CD4-positive, alpha-beta memory T cell (primary cell): ENCODE measurements at regions of chr12 and their contacts with region 1.

Region 1: DNA sequence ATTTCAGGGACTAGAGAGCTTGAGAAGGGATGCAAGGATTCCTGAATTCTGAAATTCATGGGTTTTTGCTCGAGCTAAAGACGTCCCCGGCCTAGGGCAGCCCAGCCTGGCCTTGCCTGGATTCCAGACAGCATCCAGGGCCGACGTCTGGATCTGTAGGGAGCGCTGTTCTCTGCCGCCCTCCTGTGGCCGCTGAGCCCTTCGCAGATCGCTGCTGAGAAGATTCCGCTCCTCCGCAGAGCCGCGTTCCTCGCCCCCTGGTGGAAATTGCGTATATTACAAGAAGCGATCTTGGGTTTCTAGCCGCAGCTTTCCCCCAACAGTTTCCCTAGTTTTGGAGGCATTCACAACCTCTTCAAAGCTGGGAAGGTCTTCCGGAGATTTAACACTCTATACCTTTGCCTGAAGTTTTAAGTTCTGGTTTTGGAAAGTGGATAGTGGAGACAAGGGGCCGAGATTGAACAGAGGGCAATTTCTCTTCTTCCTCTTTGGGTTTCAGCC is 5.1 kb downstream of the CISTR start:
- DNase-seq: peak; percentile 82 to 86 (median 84)
- H3K4me3 ChIP-seq: no peak overlapping the region
- H3K4me3 Mint-ChIP-seq: peak overlapping the region in 6 of 8 donors; percentile 48 to 84 (median 70)
- H3K27ac ChIP-seq: no peak overlapping the region
- H3K27ac Mint-ChIP-seq: peak overlapping the region in 1 of 7 donors; percentile 87
- H3K4me1 ChIP-seq: peaks cover 37% of the 10 kb centered on the region
- H3K4me1 Mint-ChIP-seq: peaks cover 8 to 21% (median 18%) of the 10 kb centered on the region in 4 donors
- H3K27me3 ChIP-seq: peaks cover 40% of the 10 kb centered on the region
- H3K27me3 Mint-ChIP-seq: peaks cover 22 to 39% of the 10 kb centered on the region in 2 donors

Region 2: DNA sequence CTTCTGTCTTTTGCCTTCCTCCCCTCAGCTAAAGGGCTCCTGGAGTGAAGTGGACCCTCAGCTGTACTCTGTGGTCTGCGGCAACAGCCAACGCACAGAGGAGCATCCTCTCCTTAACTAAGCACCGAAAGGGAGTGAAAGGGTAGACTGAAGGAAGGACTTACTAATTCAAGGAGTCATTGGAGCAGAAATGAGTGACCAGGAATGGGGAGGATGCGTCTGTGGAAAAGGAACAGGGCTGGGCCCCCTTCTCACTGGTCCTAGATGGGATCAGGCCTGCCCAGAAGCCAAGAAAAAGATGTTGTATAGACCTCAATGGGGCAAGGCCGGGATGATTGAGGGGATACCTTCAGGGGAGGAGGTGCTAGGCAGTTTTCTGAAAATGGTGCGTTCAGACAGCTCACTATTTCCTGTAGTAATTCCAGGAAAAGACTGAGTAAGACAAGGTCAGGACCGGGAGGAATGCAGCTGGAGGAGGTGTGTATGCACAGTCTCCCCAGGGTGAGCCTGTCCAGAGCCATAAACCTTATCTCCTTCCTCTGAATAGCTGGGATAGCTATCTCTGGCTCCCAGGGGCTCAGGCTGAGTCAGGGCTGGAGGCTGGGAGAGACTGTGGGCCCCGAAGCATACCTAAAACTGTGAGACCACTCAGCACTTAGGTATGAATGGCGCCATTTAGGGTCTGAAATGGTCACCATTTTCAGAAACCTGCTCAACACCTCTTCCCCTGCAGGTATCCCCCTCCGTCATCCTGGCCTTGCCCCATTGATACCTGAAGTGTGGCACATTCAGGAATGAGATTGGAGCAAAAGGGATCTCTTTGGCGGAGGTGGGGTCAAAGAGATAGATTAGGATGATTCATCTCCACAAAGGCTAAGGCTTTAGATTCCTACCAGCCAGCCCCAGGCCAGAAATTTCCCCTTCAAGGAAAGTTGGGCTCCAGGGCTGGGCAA is 821.6 kb before region 1 on chr12:
- CTCF ChIA-PET with region 1: no interaction called
- POLR2A ChIA-PET with region 1: no interaction called
- intact Hi-C with region 1: no loop called
- DNase-seq: no peak
- H3K4me3 ChIP-seq: no peak overlapping the region
- H3K4me3 Mint-ChIP-seq: peak overlapping the region in 1 of 8 donors; percentile 32
- H3K27ac ChIP-seq: no peak overlapping the region
- H3K27ac Mint-ChIP-seq: no peak overlapping the region
- H3K4me1 ChIP-seq: no peaks in the 10 kb centered on the region
- H3K4me1 Mint-ChIP-seq: no peaks in the 10 kb centered on the region
- H3K27me3 ChIP-seq: no peaks in the 10 kb centered on the region
- H3K27me3 Mint-ChIP-seq: peaks cover 3 to 11% of the 10 kb centered on the region in 2 donors

Region 3: GRCh38 chr12:53675651-53676453 is 70.8 kb before region 1 on chr12 and contains the start of gene ATP5MC2:
- CTCF ChIA-PET with region 1: interaction called, 38 read pairs
- POLR2A ChIA-PET with region 1: interaction called, 5 read pairs
- intact Hi-C with region 1: no loop called
- DNase-seq: peak; percentile 96 to 98 (median 98)
- H3K4me3 ChIP-seq: peak within 1 kb of the TSS; percentile 82 to 89
- H3K4me3 Mint-ChIP-seq: peak within 1 kb of the TSS; percentile 91 to 98 (median 95)
- H3K27ac ChIP-seq: peak within 1 kb of the TSS; percentile 59
- H3K27ac Mint-ChIP-seq: peak within 1 kb of the TSS; percentile 93 to 98 (median 97)
- H3K4me1 ChIP-seq: peaks cover 36% of the 10 kb centered on the region
- H3K4me1 Mint-ChIP-seq: peaks cover 18 to 40% (median 31%) of the 10 kb centered on the region in 4 donors
- H3K27me3 ChIP-seq: peaks cover 8% of the 10 kb centered on the region
- H3K27me3 Mint-ChIP-seq: peaks cover 15% of the 10 kb centered on the region in 2 donors
- total RNA-seq, gene ATP5MC2: 238 to 246 TPM

Region 4: GRCh38 chr12:53696285-53696654 is 50.4 kb before region 1 on chr12:
- CTCF ChIA-PET with region 1: interaction called, 215 read pairs
- POLR2A ChIA-PET with region 1: interaction called, 3 read pairs
- intact Hi-C with region 1: loop called (anchors 1 kb)
- DNase-seq: no peak
- H3K4me3 ChIP-seq: no peak overlapping the region
- H3K4me3 Mint-ChIP-seq: peak overlapping the region in 7 of 8 donors; percentile 11 to 85 (median 59)
- H3K27ac ChIP-seq: no peak overlapping the region
- H3K27ac Mint-ChIP-seq: peak overlapping the region in 2 of 7 donors; percentile 31 to 38
- H3K4me1 ChIP-seq: peaks cover 23% of the 10 kb centered on the region
- H3K4me1 Mint-ChIP-seq: peaks cover 21 to 39% (median 29%) of the 10 kb centered on the region in 4 donors
- H3K27me3 ChIP-seq: peaks cover 45% of the 10 kb centered on the region
- H3K27me3 Mint-ChIP-seq: peaks cover 58 to 74% of the 10 kb centered on the region in 2 donors

Region 5: GRCh38 chr12:53717319-53717718 is 29.3 kb before region 1 on chr12:
- CTCF ChIA-PET with region 1: interaction called, 59 read pairs
- POLR2A ChIA-PET with region 1: no interaction called
- intact Hi-C with region 1: no loop called
- DNase-seq: no peak
- H3K4me3 ChIP-seq: no peak overlapping the region
- H3K4me3 Mint-ChIP-seq: no peak overlapping the region
- H3K27ac ChIP-seq: no peak overlapping the region
- H3K27ac Mint-ChIP-seq: no peak overlapping the region
- H3K4me1 ChIP-seq: no peaks in the 10 kb centered on the region
- H3K4me1 Mint-ChIP-seq: peaks cover 0 to 2% (median 0%) of the 10 kb centered on the region in 4 donors
- H3K27me3 ChIP-seq: no peaks in the 10 kb centered on the region
- H3K27me3 Mint-ChIP-seq: no peaks in the 10 kb centered on the region

Region 6: DNA sequence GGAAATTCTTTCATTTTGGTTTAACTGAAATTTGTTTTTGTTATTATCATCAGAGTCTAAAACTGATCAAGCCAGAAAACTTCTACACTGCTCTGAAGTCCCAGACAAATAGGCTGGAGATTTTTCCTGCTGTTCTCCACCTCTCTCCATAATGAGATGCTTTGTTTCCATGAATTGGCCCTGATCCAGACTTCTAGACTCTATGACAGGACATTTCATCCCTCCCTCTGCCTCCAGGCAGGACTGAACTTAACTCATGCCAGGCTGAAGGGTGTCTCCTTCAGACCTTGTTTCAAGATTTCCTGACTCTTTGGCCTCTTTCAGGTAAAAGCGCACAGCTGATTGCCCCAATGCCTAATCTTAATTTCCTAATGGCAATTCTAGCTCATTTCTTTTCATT is 122.9 kb after region 1 on chr12:
- CTCF ChIA-PET with region 1: no interaction called
- POLR2A ChIA-PET with region 1: no interaction called
- intact Hi-C with region 1: no loop called
- DNase-seq: no peak
- H3K4me3 ChIP-seq: no peak overlapping the region
- H3K4me3 Mint-ChIP-seq: no peak overlapping the region
- H3K27ac ChIP-seq: no peak overlapping the region
- H3K27ac Mint-ChIP-seq: no peak overlapping the region
- H3K4me1 ChIP-seq: no peaks in the 10 kb centered on the region
- H3K4me1 Mint-ChIP-seq: no peaks in the 10 kb centered on the region
- H3K27me3 ChIP-seq: no peaks in the 10 kb centered on the region
- H3K27me3 Mint-ChIP-seq: peaks cover 22 to 48% of the 10 kb centered on the region in 2 donors

Region 7: GRCh38 chr12:54195080-54195736 is 448.6 kb after region 1 on chr12:
- CTCF ChIA-PET with region 1: no interaction called
- POLR2A ChIA-PET with region 1: no interaction called
- intact Hi-C with region 1: no loop called
- DNase-seq: no peak
- H3K4me3 ChIP-seq: no peak overlapping the region
- H3K4me3 Mint-ChIP-seq: peak overlapping the region in 1 of 8 donors; percentile 10
- H3K27ac ChIP-seq: no peak overlapping the region
- H3K27ac Mint-ChIP-seq: peak overlapping the region in 1 of 7 donors; percentile 35
- H3K4me1 ChIP-seq: peaks cover 11% of the 10 kb centered on the region
- H3K4me1 Mint-ChIP-seq: peaks cover 4 to 29% (median 8%) of the 10 kb centered on the region in 4 donors
- H3K27me3 ChIP-seq: peaks cover 34% of the 10 kb centered on the region
- H3K27me3 Mint-ChIP-seq: peaks cover 39 to 55% of the 10 kb centered on the region in 2 donors